ENCODE measurements at regions of chr11 and their contacts with region 1.

Region 1: GRCh38 chr11:129331871-129332274 is 43.8 kb upstream of the BARX2 start:
- DNase-seq: peak; percentile 26 to 81 (median 59)
- ATAC-seq: no peak
- H3K4me3 ChIP-seq: no peak overlapping the region
- H3K4me3 Mint-ChIP-seq: no peak overlapping the region
- H3K27ac ChIP-seq: no peak overlapping the region
- H3K27ac Mint-ChIP-seq: no peak overlapping the region
- H3K4me1 ChIP-seq: no peaks in the 10 kb centered on the region
- H3K4me1 Mint-ChIP-seq: no peaks in the 10 kb centered on the region
- H3K27me3 ChIP-seq: no peaks in the 10 kb centered on the region
- H3K27me3 Mint-ChIP-seq: peaks cover 2% of the 10 kb centered on the region
- CTCF ChIP-seq: peak; percentile 80

Region 2: GRCh38 chr11:129230006-129230405 is 101.9 kb before region 1 on chr11:
- CTCF ChIA-PET with region 1: interaction called, 17 read pairs
- POLR2A ChIA-PET with region 1: no interaction called
- intact Hi-C with region 1: loop called (anchors 1 kb)
- DNase-seq: peak in 2 of 9 experiments; percentile 12 to 31
- ATAC-seq: no peak
- H3K4me3 ChIP-seq: no peak overlapping the region
- H3K4me3 Mint-ChIP-seq: no peak overlapping the region
- H3K27ac ChIP-seq: no peak overlapping the region
- H3K27ac Mint-ChIP-seq: no peak overlapping the region
- H3K4me1 ChIP-seq: no peaks in the 10 kb centered on the region
- H3K4me1 Mint-ChIP-seq: no peaks in the 10 kb centered on the region
- H3K27me3 ChIP-seq: no peaks in the 10 kb centered on the region
- H3K27me3 Mint-ChIP-seq: no peaks in the 10 kb centered on the region
- CTCF ChIP-seq: no peak

Region 3: DNA sequence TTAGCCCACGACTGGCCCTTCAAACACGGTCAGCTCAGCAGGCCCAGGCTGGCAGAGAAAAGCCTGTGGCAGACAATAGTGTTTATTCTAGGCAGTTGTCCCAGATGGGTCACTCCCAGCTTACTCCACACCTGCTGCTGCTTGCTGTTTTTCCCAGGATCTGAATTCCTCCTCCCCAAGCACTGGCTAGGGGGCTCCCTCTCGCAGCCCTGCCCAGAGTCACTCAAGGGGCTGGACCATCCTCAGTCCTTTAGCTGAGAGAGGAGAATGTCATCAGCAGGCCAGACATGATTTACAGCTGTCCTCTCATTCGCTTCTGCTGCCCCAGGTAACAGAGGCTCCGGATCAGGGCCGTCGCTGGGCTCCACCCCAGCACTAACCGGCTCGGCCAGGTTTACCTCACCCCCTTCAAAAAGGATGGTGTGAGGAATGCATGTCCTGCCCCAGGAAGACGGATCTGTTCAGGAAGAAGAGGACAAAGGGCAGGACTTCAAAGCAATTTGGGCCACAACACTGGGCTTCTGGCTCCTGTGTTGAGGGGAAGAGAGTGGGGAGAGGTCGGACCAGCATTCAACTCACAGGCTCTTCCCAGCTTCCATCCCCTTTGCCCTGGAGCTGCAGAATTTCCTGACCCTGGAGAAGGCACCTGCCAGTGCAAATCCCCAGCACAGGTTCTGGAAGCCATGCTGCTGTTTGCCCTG is 15.9 kb before region 1 on chr11:
- CTCF ChIA-PET with region 1: interaction called, 26 read pairs
- POLR2A ChIA-PET with region 1: no interaction called
- intact Hi-C with region 1: no loop called
- DNase-seq: no peak
- ATAC-seq: no peak
- H3K4me3 ChIP-seq: no peak overlapping the region
- H3K4me3 Mint-ChIP-seq: no peak overlapping the region
- H3K27ac ChIP-seq: no peak overlapping the region
- H3K27ac Mint-ChIP-seq: no peak overlapping the region
- H3K4me1 ChIP-seq: no peaks in the 10 kb centered on the region
- H3K4me1 Mint-ChIP-seq: peaks cover 2% of the 10 kb centered on the region
- H3K27me3 ChIP-seq: no peaks in the 10 kb centered on the region
- H3K27me3 Mint-ChIP-seq: no peaks in the 10 kb centered on the region
- CTCF ChIP-seq: no peak

Region 4: DNA sequence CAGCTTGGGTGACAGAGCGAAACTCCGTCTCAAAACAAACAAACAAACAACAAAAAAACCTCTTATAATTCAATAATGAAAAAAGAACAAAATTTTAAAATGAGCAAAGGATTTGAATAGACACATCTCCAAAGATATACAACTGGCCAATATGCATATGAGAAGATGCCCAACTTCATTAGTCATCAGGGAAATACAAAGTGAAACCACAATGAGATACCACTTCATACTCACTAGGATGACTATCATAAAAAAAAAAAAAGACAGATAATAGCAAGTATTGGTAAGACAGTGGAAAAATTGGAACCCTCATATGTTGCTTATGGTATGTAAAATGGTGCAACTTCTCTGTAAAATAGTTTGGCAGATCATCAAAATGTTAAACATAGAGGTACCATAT is 15.0 kb after region 1 on chr11:
- CTCF ChIA-PET with region 1: no interaction called
- POLR2A ChIA-PET with region 1: no interaction called
- intact Hi-C with region 1: no loop called
- DNase-seq: no peak
- ATAC-seq: no peak
- H3K4me3 ChIP-seq: no peak overlapping the region
- H3K4me3 Mint-ChIP-seq: no peak overlapping the region
- H3K27ac ChIP-seq: no peak overlapping the region
- H3K27ac Mint-ChIP-seq: no peak overlapping the region
- H3K4me1 ChIP-seq: no peaks in the 10 kb centered on the region
- H3K4me1 Mint-ChIP-seq: no peaks in the 10 kb centered on the region
- H3K27me3 ChIP-seq: no peaks in the 10 kb centered on the region
- H3K27me3 Mint-ChIP-seq: peaks cover 3% of the 10 kb centered on the region
- CTCF ChIP-seq: no peak

Region 5: DNA sequence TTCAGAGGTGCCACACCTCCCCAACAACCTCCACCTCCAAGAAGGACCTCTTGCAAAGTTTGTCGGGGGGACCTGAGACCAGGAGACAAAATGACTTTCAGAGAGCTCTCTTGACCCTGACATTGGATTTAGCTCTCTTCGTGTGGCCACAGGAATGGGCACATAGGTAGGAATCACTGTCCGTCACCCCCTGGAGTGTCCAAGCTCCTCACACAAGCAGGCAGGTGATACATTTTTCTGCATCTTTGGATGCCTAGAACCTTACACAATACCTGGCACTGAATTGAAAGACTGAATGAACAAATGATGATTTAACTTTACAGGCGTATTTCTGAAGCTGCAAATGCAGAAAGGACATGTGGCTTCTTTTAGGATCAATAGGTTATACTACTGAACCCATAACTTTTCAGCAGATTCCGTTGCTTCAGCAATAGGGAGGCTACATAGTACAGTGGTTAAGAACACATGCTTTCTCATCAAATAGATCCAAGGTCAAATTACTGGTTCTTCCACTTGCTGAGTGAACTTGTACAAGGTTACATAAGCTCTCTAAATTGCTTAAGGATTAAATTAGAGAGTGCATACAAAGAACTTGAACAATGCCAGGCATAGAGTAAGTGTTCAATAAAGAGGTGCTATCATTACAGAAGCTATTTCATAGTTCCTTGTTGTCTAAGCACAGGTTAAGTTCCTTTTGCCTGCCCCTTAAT is 173.2 kb after region 1 on chr11:
- CTCF ChIA-PET with region 1: no interaction called
- POLR2A ChIA-PET with region 1: no interaction called
- intact Hi-C with region 1: no loop called
- DNase-seq: no peak
- ATAC-seq: no peak
- H3K4me3 ChIP-seq: no peak overlapping the region
- H3K4me3 Mint-ChIP-seq: no peak overlapping the region
- H3K27ac ChIP-seq: no peak overlapping the region
- H3K27ac Mint-ChIP-seq: no peak overlapping the region
- H3K4me1 ChIP-seq: no peaks in the 10 kb centered on the region
- H3K4me1 Mint-ChIP-seq: no peaks in the 10 kb centered on the region
- H3K27me3 ChIP-seq: no peaks in the 10 kb centered on the region
- H3K27me3 Mint-ChIP-seq: no peaks in the 10 kb centered on the region
- CTCF ChIP-seq: no peak

Measured in CD8-positive, alpha-beta T cell (primary cell).